CD4-positive, alpha-beta T cell (primary cell): ENCODE measurements at regions of chr12 and their contacts with region 1.

Region 1: DNA sequence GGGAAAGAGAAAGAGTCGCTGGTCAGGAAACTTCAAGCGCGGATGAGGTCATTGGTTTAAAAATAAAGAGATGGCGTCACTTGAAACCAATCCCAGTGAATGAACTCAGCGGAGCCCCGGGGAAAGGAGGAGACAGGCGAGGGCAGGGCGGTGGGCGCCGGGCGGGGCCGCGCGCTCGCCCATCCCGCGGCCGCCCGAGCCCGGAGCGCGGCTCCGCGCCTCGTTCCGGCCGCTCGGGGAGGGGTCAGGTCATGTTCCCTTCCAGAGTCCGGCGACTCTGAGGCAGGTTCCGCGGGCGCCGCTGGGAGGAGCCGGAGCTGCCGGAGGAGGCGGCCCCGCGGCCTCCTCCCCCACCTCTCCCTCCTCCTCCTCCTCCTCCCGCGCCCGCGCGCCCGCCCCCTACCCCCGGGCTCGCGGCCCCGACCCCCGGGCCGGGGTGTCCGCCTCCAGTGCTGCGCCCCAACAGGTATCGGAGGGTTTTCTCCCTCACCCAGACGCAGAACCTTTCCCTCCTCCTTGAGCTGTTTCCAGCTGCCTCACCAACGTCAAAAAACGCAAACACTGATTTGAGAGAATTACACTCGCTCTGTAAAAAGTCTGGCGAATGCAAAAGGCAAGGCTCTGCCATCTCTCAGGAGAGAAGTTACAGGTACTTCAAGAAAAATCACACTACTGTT is at the start of gene DUSP16:
- DNase-seq: peak; percentile 52 to 95 (median 69)
- ATAC-seq: peak; percentile 62
- H3K4me3 ChIP-seq: peak within 1 kb of the TSS; percentile 88
- H3K4me3 Mint-ChIP-seq: peak within 1 kb of the TSS; percentile 99
- H3K27ac ChIP-seq: peak within 1 kb of the TSS; percentile 95 to 98
- H3K27ac Mint-ChIP-seq: peak within 1 kb of the TSS; percentile 99
- H3K4me1 ChIP-seq: peaks cover 19% of the 10 kb centered on the region
- H3K4me1 Mint-ChIP-seq: peaks cover 52% of the 10 kb centered on the region
- H3K27me3 ChIP-seq: no peaks in the 10 kb centered on the region
- H3K27me3 Mint-ChIP-seq: no peaks in the 10 kb centered on the region
- CTCF ChIP-seq: no peak
- total RNA-seq, gene DUSP16: 33.3 to 35.6 TPM

Region 2: GRCh38 chr12:12456637-12457036 is 106.1 kb before region 1 on chr12:
- CTCF ChIA-PET with region 1: interaction called, 4 read pairs
- POLR2A ChIA-PET with region 1: interaction called, 18 read pairs
- intact Hi-C with region 1: no loop called
- DNase-seq: peak in 3 of 14 experiments; percentile 61 to 67 (median 63)
- ATAC-seq: peak; percentile 74
- H3K4me3 ChIP-seq: peak overlapping the region; percentile 29
- H3K4me3 Mint-ChIP-seq: peak overlapping the region; percentile 68
- H3K27ac ChIP-seq: peak overlapping the region in 1 of 2 donors; percentile 68
- H3K27ac Mint-ChIP-seq: peak overlapping the region; percentile 85
- H3K4me1 ChIP-seq: peaks cover 18% of the 10 kb centered on the region
- H3K4me1 Mint-ChIP-seq: peaks cover 42% of the 10 kb centered on the region
- H3K27me3 ChIP-seq: no peaks in the 10 kb centered on the region
- H3K27me3 Mint-ChIP-seq: no peaks in the 10 kb centered on the region
- CTCF ChIP-seq: no peak

Region 3: DNA sequence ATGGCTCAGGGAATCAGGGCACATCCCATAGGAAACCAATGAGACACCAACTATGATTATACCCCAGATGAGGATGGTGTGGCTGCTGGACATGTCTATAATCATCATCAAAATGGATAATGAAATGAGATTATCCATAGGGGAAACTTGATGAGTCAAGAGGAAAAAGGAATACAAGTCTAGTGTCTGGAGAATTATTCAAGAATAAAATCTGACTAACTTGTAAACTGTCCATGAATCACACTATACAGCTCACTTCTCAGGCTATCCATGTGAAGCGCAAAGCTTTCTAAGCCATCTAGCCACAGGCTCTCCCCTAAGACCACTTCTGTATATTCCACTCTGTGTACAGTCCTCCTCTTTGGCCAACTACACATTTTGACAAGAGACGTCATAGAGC is 52.6 kb before region 1 on chr12:
- CTCF ChIA-PET with region 1: no interaction called
- POLR2A ChIA-PET with region 1: no interaction called
- intact Hi-C with region 1: loop called in 1 of 2 experiments (anchors 5 kb)
- DNase-seq: no peak
- ATAC-seq: no peak
- H3K4me3 ChIP-seq: no peak overlapping the region
- H3K4me3 Mint-ChIP-seq: no peak overlapping the region
- H3K27ac ChIP-seq: no peak overlapping the region
- H3K27ac Mint-ChIP-seq: no peak overlapping the region
- H3K4me1 ChIP-seq: peaks cover 20% of the 10 kb centered on the region
- H3K4me1 Mint-ChIP-seq: peaks cover 48% of the 10 kb centered on the region
- H3K27me3 ChIP-seq: no peaks in the 10 kb centered on the region
- H3K27me3 Mint-ChIP-seq: no peaks in the 10 kb centered on the region
- CTCF ChIP-seq: no peak

Region 4: GRCh38 chr12:12622418-12622817 is 59.7 kb after region 1 on chr12:
- CTCF ChIA-PET with region 1: no interaction called
- POLR2A ChIA-PET with region 1: interaction called, 5 read pairs
- intact Hi-C with region 1: loop called in 1 of 2 experiments (anchors 2 kb)
- DNase-seq: peak in 4 of 14 experiments; percentile 21 to 76 (median 72)
- ATAC-seq: peak; percentile 87
- H3K4me3 ChIP-seq: peak overlapping the region; percentile 24
- H3K4me3 Mint-ChIP-seq: peak overlapping the region; percentile 50
- H3K27ac ChIP-seq: peak overlapping the region; percentile 24 to 64
- H3K27ac Mint-ChIP-seq: peak overlapping the region; percentile 82
- H3K4me1 ChIP-seq: peaks cover 52% of the 10 kb centered on the region
- H3K4me1 Mint-ChIP-seq: peaks cover 85% of the 10 kb centered on the region
- H3K27me3 ChIP-seq: no peaks in the 10 kb centered on the region
- H3K27me3 Mint-ChIP-seq: no peaks in the 10 kb centered on the region
- CTCF ChIP-seq: no peak

Region 5: DNA sequence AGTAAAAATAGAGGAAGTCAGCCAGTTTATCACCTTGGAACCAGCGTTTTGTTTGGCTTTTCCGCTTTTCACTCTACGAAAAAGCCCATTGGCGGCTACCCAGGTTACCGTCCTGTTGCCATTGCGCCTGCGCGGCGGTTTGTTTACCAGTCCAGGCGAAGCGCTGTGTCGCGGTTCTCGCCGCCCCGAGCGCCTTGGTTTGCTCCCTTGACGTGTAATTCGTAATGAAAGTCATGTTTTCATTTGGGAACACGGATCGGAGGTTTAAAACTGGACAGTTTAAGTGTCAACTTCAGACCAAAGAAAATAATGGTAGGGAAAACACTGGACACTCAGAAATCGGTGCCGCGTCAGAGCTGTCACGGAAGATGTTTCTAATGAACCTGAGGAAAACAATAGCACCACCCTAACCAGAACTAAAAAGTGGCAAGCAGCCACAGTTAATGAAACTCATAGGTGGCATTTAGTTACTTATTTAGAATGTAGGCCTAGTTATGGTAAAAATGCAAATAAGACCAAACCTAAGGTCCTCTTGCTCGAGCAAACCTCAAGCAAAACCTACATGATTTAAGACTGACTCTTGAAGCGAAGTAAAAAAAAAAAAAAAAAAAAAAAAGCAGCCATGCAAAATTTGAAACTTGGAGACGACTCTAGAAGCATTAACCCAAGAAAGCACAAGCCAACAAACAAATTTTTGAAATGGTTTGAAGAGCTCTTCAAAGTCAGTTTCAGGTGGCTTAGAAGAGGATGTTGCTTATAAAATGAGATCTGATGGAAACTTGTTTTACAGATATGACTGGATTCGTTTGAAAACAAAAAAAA is 134.1 kb after region 1 on chr12:
- CTCF ChIA-PET with region 1: no interaction called
- POLR2A ChIA-PET with region 1: interaction called, 21 read pairs
- intact Hi-C with region 1: loop called (anchors 1 to 5 kb)
- DNase-seq: peak; percentile 90 to 97 (median 92)
- ATAC-seq: peak; percentile 83
- H3K4me3 ChIP-seq: peak overlapping the region; percentile 61
- H3K4me3 Mint-ChIP-seq: peak overlapping the region; percentile 94
- H3K27ac ChIP-seq: peak overlapping the region; percentile 96 to 97
- H3K27ac Mint-ChIP-seq: peak overlapping the region; percentile 100
- H3K4me1 ChIP-seq: peaks cover 7% of the 10 kb centered on the region
- H3K4me1 Mint-ChIP-seq: peaks cover 41% of the 10 kb centered on the region
- H3K27me3 ChIP-seq: no peaks in the 10 kb centered on the region
- H3K27me3 Mint-ChIP-seq: no peaks in the 10 kb centered on the region
- CTCF ChIP-seq: no peak

Region 6: DNA sequence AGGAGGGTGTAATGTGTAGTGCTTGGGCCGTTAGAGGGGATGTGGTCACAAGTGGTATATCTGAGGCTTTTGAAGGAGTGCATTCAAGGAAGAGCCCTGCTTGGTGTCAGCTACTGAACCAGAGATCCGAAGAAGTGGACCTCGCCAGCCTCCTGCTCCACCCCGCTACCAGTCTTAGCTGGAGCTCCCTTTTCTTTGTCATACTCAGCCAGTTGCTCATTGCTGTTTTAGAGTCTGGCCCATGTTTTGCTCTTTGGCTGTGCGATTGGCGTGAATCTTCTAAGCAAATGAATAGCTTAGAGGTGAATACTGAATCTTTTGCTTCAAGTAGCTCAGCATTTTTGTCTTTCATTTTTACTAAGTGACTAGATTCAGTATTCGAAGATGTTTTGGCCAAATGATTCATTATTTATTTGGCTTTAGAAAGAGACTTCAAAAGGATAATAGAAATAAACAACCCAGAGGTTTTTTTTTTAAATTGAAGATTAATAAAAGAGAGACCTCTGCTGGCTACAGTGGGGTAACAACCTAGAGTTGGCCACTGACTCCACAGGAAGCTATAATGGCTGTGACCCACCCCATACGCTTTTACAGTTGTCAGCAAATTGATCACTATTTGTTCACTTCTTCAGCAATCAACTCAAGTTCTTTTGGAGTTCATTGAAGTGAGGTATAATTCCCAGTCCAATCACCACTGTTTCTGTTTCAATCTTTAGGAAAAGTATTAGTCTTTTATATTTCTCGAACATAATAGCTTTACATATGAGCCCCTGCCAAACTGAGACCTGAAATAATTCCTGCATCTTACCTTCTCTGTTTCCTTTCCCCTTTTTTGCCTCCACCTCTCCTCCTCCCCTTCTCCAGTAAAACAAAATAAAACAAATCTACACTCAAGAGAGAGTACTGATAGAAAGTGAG is 174.3 kb after region 1 on chr12:
- CTCF ChIA-PET with region 1: interaction called, 12 read pairs
- POLR2A ChIA-PET with region 1: interaction called, 15 read pairs
- intact Hi-C with region 1: loop called in 1 of 2 experiments (anchors 5 kb)
- DNase-seq: peak in 13 of 14 experiments; percentile 15 to 87 (median 33)
- ATAC-seq: peak; percentile 82
- H3K4me3 ChIP-seq: peak overlapping the region; percentile 34
- H3K4me3 Mint-ChIP-seq: peak overlapping the region; percentile 58
- H3K27ac ChIP-seq: peak overlapping the region; percentile 34 to 40
- H3K27ac Mint-ChIP-seq: peak overlapping the region; percentile 85
- H3K4me1 ChIP-seq: peaks cover 30% of the 10 kb centered on the region
- H3K4me1 Mint-ChIP-seq: peaks cover 41% of the 10 kb centered on the region
- H3K27me3 ChIP-seq: no peaks in the 10 kb centered on the region
- H3K27me3 Mint-ChIP-seq: no peaks in the 10 kb centered on the region
- CTCF ChIP-seq: peak; percentile 71